CD8-positive, alpha-beta T cell (primary cell): ENCODE measurements at regions of chr1 and their contacts with region 1.

Region 1: GRCh38 chr1:53462769-53463501 is 3.7 kb downstream of the DMRTB1 start:
- DNase-seq: no peak
- ATAC-seq: no peak
- H3K4me3 ChIP-seq: no peak overlapping the region
- H3K4me3 Mint-ChIP-seq: no peak overlapping the region
- H3K27ac ChIP-seq: no peak overlapping the region
- H3K27ac Mint-ChIP-seq: no peak overlapping the region
- H3K4me1 ChIP-seq: no peaks in the 10 kb centered on the region
- H3K4me1 Mint-ChIP-seq: no peaks in the 10 kb centered on the region
- H3K27me3 ChIP-seq: no peaks in the 10 kb centered on the region
- H3K27me3 Mint-ChIP-seq: no peaks in the 10 kb centered on the region
- CTCF ChIP-seq: no peak

Region 2: GRCh38 chr1:53550201-53550741 is 87.3 kb after region 1 on chr1:
- CTCF ChIA-PET with region 1: no interaction called
- POLR2A ChIA-PET with region 1: no interaction called
- intact Hi-C with region 1: no loop called
- DNase-seq: peak in 1 of 9 experiments; percentile 15
- ATAC-seq: no peak
- H3K4me3 ChIP-seq: no peak overlapping the region
- H3K4me3 Mint-ChIP-seq: no peak overlapping the region
- H3K27ac ChIP-seq: no peak overlapping the region
- H3K27ac Mint-ChIP-seq: no peak overlapping the region
- H3K4me1 ChIP-seq: no peaks in the 10 kb centered on the region
- H3K4me1 Mint-ChIP-seq: peaks cover 4% of the 10 kb centered on the region
- H3K27me3 ChIP-seq: no peaks in the 10 kb centered on the region
- H3K27me3 Mint-ChIP-seq: no peaks in the 10 kb centered on the region
- CTCF ChIP-seq: no peak

Region 3: DNA sequence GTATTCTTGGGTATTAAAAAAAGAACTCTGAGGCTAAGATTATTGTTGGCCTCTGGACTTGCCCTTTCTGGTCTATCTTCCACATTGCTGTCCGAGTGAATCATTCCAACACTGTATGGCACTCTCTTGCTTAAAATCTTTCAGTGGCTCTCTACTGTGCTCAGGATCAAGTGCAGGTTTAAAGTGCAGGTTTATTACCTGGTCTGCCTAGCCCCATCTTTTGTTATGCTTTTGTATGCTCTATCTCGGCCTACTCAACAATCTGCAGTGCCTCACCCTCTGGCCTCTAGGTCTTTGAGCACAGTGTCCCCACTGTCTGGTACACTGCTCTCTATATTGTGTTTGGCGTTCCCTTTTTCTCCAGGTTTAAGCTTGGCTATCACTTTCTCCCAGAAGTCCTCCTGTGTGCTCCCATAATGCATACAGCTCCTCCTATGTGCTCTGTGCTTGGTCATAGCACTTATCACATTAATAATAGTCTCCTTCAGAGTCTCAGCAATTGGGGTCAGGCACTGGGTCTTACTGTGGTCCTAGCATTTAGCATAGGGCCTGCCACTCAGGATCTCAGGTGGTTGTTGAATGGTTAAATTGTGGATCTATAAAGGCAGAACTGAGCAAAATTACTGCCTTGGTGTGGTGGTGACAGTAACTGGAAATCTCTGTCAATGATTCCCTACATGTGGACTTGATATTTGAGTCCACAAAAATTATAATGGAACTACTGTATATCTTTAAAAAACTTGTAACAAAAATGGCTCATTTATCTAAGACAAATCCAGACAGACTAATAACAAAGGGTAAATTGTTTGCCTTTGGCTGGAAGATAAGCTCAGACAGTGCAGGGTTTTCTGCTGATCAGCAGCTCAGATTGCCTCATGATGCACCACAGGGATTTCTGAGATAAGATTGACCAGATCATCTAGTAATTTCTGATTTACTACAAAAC is 565.6 kb after region 1 on chr1:
- CTCF ChIA-PET with region 1: no interaction called
- POLR2A ChIA-PET with region 1: no interaction called
- intact Hi-C with region 1: loop called in 1 of 2 experiments (anchors 10 kb)
- DNase-seq: peak in 1 of 9 experiments; percentile 23
- ATAC-seq: no peak
- H3K4me3 ChIP-seq: no peak overlapping the region
- H3K4me3 Mint-ChIP-seq: no peak overlapping the region
- H3K27ac ChIP-seq: no peak overlapping the region
- H3K27ac Mint-ChIP-seq: peak overlapping the region; percentile 30
- H3K4me1 ChIP-seq: no peaks in the 10 kb centered on the region
- H3K4me1 Mint-ChIP-seq: no peaks in the 10 kb centered on the region
- H3K27me3 ChIP-seq: no peaks in the 10 kb centered on the region
- H3K27me3 Mint-ChIP-seq: no peaks in the 10 kb centered on the region
- CTCF ChIP-seq: no peak